Endothelial cell of umbilical vein (primary cell): ENCODE measurements at regions of chr3 and their contacts with region 1.

Region 1: GRCh38 chr3:7707187-7707586 is 794.4 kb upstream of the LMCD1 start:
- DNase-seq: peak; percentile 74
- H3K4me3 ChIP-seq: no peak overlapping the region
- H3K27ac ChIP-seq: peak overlapping the region; percentile 95
- H3K4me1 ChIP-seq: peaks cover 55% of the 10 kb centered on the region
- H3K27me3 ChIP-seq: no peaks in the 10 kb centered on the region
- CTCF ChIP-seq: no peak
- POLR2A ChIP-seq: peak; percentile 22

Region 2: GRCh38 chr3:7285505-7285904 is 421.7 kb before region 1 on chr3:
- CTCF ChIA-PET with region 1: interaction called, 3 read pairs
- POLR2A ChIA-PET with region 1: no interaction called
- dilution Hi-C with region 1: no loop called
- intact Hi-C with region 1: loop called (anchors 1 kb)
- DNase-seq: peak; percentile 49
- H3K4me3 ChIP-seq: no peak overlapping the region
- H3K27ac ChIP-seq: no peak overlapping the region
- H3K4me1 ChIP-seq: peaks cover 28% of the 10 kb centered on the region
- H3K27me3 ChIP-seq: no peaks in the 10 kb centered on the region
- CTCF ChIP-seq: peak in 1 of 2 donors; percentile 14
- POLR2A ChIP-seq: no peak

Region 3: DNA sequence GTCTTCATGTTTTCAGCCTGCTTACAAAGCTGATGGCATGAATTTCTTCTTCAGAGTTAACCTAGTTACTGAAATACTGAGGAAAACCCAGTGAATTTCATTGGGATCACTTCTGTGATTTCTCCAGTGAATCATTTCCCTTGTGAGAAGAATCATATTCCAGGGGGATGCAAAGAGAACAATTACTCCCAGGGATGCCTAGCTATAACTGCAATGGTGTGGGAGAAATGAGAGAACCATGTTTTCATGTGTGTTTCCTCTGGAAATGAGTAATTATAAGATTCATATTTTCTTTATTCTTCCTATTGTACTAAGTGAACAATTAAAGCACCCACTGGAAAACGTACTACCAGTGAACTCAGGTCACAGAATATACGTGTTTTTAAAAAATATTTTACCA is 360.8 kb before region 1 on chr3:
- CTCF ChIA-PET with region 1: no interaction called
- POLR2A ChIA-PET with region 1: no interaction called
- dilution Hi-C with region 1: no loop called
- intact Hi-C with region 1: loop called (anchors 2 kb)
- DNase-seq: peak; percentile 97
- H3K4me3 ChIP-seq: peak overlapping the region in 1 of 3 experiments; percentile 6
- H3K27ac ChIP-seq: peak overlapping the region; percentile 97
- H3K4me1 ChIP-seq: peaks cover 24% of the 10 kb centered on the region
- H3K27me3 ChIP-seq: no peaks in the 10 kb centered on the region
- CTCF ChIP-seq: no peak
- POLR2A ChIP-seq: peak; percentile 19

Region 4: GRCh38 chr3:7382293-7383010 is 324.7 kb before region 1 on chr3:
- CTCF ChIA-PET with region 1: no interaction called
- POLR2A ChIA-PET with region 1: no interaction called
- dilution Hi-C with region 1: no loop called
- intact Hi-C with region 1: loop called (anchors 1 kb)
- DNase-seq: peak; percentile 98
- H3K4me3 ChIP-seq: no peak overlapping the region
- H3K27ac ChIP-seq: peak overlapping the region; percentile 57
- H3K4me1 ChIP-seq: peaks cover 18% of the 10 kb centered on the region
- H3K27me3 ChIP-seq: no peaks in the 10 kb centered on the region
- CTCF ChIP-seq: no peak
- POLR2A ChIP-seq: no peak

Region 5: DNA sequence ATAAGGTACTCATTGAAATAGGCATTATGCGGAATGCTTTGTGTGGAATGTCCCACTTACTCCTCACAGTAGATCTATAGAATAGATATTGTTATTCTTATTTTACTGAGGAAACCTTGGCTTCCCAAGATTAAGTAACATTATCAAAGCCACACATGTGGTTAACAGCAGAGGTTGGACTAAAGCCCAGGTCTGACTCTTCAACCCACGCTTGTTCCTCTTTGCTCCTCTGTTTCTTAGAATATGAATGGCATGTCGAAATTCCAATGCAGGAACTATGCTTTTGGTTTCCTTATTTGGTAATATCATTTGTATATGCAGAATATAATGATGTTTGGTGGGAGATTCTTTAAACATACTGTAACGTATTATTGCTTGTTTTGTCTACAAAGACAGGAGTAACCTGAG is 24.4 kb before region 1 on chr3:
- CTCF ChIA-PET with region 1: interaction called, 14 read pairs
- POLR2A ChIA-PET with region 1: interaction called, 5 read pairs
- dilution Hi-C with region 1: no loop called
- intact Hi-C with region 1: loop called (anchors 1 kb)
- DNase-seq: peak; percentile 97
- H3K4me3 ChIP-seq: no peak overlapping the region
- H3K27ac ChIP-seq: peak overlapping the region; percentile 67
- H3K4me1 ChIP-seq: peaks cover 21% of the 10 kb centered on the region
- H3K27me3 ChIP-seq: no peaks in the 10 kb centered on the region
- CTCF ChIP-seq: no peak
- POLR2A ChIP-seq: no peak

Region 6: DNA sequence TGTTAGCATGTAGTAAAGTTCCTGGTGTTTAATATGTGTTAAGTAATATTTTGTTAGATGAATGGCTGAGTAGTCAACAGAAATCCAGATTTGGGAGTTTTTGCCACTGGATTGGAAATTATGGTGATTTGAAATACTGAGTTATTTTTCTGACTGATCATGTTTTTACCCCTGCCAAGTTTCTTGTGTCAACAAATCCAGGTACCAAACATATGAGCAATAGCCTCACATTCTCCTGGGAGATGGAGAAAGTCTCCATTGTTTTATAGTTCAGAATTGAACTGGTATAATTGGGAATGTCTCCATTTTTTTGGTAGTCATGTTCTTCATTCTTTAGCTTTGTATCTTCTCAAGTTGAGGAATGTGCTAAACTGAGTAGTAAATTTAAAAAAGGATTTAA is 27.3 kb after region 1 on chr3:
- CTCF ChIA-PET with region 1: interaction called, 6 read pairs
- POLR2A ChIA-PET with region 1: no interaction called
- dilution Hi-C with region 1: no loop called
- intact Hi-C with region 1: loop called (anchors 1 kb)
- DNase-seq: peak; percentile 71
- H3K4me3 ChIP-seq: no peak overlapping the region
- H3K27ac ChIP-seq: peak overlapping the region; percentile 85
- H3K4me1 ChIP-seq: peaks cover 33% of the 10 kb centered on the region
- H3K27me3 ChIP-seq: no peaks in the 10 kb centered on the region
- CTCF ChIP-seq: no peak
- POLR2A ChIP-seq: no peak

Region 7: DNA sequence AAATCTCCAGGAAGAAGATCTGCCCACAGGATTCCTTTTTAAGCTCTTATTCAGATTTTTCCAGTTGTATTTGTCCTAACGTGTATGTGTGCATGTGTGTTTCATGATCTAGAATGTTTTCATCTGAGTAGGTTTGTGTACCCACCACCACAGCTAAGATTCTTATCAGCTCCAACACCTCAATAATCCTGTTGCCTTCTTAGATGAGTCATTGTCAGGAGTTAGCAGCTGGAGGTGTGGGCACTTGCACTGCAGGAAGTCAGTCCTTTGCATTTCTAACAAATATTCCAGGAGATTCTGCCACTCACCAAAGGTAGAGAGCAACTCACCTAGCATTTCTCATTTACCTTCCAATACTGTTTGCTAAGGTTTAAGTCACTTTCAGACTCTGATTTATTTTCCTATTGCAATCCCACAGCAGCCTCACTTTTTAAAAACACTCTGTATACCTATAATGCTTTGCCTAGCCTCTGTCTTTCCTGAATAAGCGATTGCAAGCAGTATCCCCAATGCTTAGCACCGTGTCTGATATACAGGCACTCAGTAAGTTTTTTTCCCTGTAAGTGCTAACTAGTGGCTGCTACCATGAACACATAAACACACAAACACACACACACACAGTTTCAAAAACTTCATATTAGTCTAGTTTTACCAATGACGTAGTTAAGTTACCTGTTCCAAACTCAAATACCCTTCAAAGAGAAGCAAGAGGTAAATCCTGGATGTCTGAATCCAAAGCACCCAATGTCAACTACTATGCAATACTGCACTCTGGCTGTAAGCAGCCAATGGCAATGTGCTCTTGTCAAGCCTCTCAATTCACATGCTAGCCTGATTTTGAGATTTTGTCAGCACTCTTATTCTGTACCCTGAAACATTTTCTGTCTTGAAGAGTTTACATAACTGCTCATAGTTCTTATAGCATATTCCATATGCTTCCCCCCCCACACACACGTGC is 81.0 kb after region 1 on chr3:
- CTCF ChIA-PET with region 1: no interaction called
- POLR2A ChIA-PET with region 1: no interaction called
- dilution Hi-C with region 1: no loop called
- intact Hi-C with region 1: loop called (anchors 5 kb)
- DNase-seq: peak; percentile 37
- H3K4me3 ChIP-seq: no peak overlapping the region
- H3K27ac ChIP-seq: no peak overlapping the region
- H3K4me1 ChIP-seq: peaks cover 9% of the 10 kb centered on the region
- H3K27me3 ChIP-seq: no peaks in the 10 kb centered on the region
- CTCF ChIP-seq: no peak
- POLR2A ChIP-seq: no peak